ENCODE measurements at regions of chr19 and their contacts with region 1.

Region 1: GRCh38 chr19:47713046-47714021 is at the start of gene EHD2:
- DNase-seq: peak; percentile 52
- ATAC-seq: peak; percentile 75
- H3K4me3 Mint-ChIP-seq: no peak within 1 kb of the TSS
- H3K27ac Mint-ChIP-seq: no peak within 1 kb of the TSS
- H3K4me1 Mint-ChIP-seq: peaks cover 2% of the 10 kb centered on the region
- H3K27me3 Mint-ChIP-seq: peaks cover 28% of the 10 kb centered on the region
- total RNA-seq, gene EHD2: 0.34 TPM in 1 of 2 experiments, not detected in the other

Region 2: DNA sequence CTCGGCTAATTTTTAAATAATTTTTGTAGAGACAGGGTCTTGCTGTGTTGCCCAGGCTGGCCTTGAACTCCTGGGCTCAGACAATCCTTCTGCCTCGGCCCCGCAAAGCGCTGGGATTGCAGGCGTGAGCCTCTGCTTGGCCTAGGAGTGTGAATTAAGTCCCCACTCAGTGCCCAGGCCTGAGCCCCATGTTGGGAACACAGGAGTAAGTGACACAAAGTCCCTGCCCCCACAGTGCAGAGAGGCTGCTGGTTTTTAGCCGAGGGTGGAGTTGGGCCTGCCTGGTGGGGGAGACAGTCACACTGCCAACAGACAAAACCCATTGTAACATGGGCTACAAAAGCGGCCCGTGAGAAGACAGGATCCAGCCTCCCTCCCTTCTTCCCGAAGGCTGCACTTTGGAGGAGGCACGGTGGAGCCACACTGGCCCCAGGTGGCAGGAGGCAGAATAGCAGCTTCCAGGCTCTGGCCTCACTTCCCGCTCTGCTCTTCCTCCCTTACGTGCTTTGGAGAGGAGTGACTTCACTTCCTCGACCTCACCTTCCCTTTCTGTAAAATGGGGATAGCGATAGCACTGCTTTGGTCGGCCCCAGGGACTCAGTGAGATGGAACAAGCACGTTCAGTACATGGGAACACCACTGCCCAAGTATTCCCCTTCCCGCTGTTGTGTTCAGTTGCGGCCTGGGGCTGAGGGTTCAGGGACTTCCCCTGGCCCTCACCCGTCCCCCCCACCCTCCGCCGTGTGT is 15.3 kb before region 1 on chr19:
- CTCF ChIA-PET with region 1: interaction called, 21 read pairs
- POLR2A ChIA-PET with region 1: no interaction called
- DNase-seq: peak; percentile 65
- ATAC-seq: peak; percentile 65
- H3K4me3 Mint-ChIP-seq: no peak overlapping the region
- H3K27ac Mint-ChIP-seq: no peak overlapping the region
- H3K4me1 Mint-ChIP-seq: peaks cover 2% of the 10 kb centered on the region
- H3K27me3 Mint-ChIP-seq: no peaks in the 10 kb centered on the region

Region 3: GRCh38 chr19:47745010-47745901 is 31.9 kb after region 1 on chr19 and contains the start of gene NOP53:
- CTCF ChIA-PET with region 1: interaction called, 64 read pairs
- POLR2A ChIA-PET with region 1: interaction called, 3 read pairs
- DNase-seq: peak; percentile 97
- ATAC-seq: peak; percentile 78
- H3K4me3 Mint-ChIP-seq: peak within 1 kb of the TSS; percentile 99
- H3K27ac Mint-ChIP-seq: peak within 1 kb of the TSS; percentile 99
- H3K4me1 Mint-ChIP-seq: peaks cover 54% of the 10 kb centered on the region
- H3K27me3 Mint-ChIP-seq: no peaks in the 10 kb centered on the region
- total RNA-seq, gene NOP53: 244 to 272 TPM

Region 4: GRCh38 chr19:47790398-47790814 is 77.1 kb after region 1 on chr19:
- CTCF ChIA-PET with region 1: interaction called, 14 read pairs
- POLR2A ChIA-PET with region 1: no interaction called
- DNase-seq: peak; percentile 86
- ATAC-seq: peak; percentile 80
- H3K4me3 Mint-ChIP-seq: no peak overlapping the region
- H3K27ac Mint-ChIP-seq: no peak overlapping the region
- H3K4me1 Mint-ChIP-seq: peaks cover 7% of the 10 kb centered on the region
- H3K27me3 Mint-ChIP-seq: no peaks in the 10 kb centered on the region

Measured in activated CD8-positive, alpha-beta T cell treated with anti-CD3 and anti-CD28 coated beads, Interleukin-2, amount 10 ng/mL, durations not matched to agents 7 days and 5 days (primary cell).